Right ventricle myocardium inferior (tissue), 1 donor: ENCODE measurements at regions of chr17 and their contacts with region 1.

Region 1: DNA sequence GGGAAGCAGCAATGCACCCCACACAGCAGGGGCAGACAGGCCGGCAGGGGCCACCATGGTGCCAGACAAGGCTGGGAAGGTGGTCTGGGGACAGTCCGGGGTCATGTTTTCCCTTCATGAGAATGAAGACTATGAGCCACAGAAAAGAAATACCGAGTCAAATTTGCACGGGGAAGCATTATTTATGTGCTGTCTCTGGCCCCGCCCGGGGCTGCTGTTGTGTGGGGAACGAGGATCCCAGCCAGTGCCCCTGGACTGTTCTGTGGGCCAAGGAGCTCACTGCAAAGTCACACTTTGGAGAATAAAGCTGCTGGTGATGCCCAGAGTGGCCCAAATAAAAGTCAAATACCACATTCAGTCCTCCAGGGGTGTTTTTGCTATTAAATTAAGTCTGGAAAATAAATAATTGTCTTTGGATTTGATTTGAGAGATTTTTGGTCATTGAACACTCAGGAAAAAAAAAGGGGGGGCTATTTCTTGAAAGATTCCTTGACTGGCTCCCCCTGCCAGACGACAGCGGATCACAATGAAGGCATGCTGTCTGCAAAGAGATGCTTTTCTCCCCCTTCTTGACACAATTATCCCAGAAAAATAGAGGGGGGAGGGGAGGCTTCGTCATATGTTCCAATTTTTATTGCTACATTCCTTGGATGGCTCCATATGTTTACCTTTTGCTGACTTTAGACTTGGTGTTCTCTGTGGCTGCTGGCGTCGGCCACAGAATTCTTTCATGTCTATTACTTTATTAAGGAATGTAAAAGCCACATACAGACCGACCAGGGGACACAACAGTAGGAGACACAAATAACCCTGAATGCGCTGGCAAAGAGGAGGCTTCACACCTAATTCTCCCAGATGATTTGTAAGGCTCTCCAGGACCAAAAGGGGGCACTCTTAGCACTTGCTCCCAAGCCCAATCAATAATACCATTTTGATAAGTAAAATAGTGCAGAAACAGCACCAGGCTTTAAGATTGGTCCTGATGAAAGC is 27.1 kb upstream of the ANKFN1 start:
- DNase-seq: peak; percentile 60
- ATAC-seq: no peak

Region 2: GRCh38 chr17:56325313-56326000 is 199.3 kb after region 1 on chr17:
- intact Hi-C with region 1: loop called (anchors 10 kb)
- DNase-seq: no peak
- ATAC-seq: no peak

Region 3: DNA sequence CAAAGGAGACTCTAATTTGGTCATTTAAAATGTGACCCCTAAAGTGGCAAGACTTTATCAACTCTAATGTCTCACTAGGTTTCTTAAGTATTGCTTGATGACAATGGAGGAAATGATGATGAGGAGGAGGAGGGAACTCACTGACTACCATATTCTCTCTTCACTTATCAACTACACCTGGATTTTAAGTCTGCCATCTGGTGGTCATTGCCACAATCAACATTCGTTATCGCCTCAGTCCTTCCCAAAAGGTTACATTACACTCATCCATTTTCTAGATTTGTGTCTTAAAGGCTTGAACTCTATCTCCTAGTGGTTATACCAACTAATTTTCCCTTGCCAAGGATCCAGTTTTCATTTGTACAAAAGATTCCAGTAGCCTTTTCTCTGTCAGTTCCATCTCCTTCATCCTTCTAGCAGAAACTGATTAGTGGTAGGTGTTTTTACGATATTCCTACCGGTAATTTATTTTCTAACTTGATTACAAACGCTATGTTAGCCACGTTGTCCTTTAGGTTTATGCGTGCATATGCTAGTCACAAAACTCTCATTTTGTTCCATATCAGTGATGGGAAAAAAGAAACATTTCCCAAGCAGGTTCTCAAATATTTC is 352.8 kb after region 1 on chr17:
- intact Hi-C with region 1: loop called (anchors 5 kb)
- DNase-seq: no peak
- ATAC-seq: no peak

Region 4: GRCh38 chr17:56754523-56755208 is 628.5 kb after region 1 on chr17:
- intact Hi-C with region 1: no loop called
- DNase-seq: no peak
- ATAC-seq: no peak